ENCODE measurements at regions of chr20 and their contacts with region 1.

Region 1: DNA sequence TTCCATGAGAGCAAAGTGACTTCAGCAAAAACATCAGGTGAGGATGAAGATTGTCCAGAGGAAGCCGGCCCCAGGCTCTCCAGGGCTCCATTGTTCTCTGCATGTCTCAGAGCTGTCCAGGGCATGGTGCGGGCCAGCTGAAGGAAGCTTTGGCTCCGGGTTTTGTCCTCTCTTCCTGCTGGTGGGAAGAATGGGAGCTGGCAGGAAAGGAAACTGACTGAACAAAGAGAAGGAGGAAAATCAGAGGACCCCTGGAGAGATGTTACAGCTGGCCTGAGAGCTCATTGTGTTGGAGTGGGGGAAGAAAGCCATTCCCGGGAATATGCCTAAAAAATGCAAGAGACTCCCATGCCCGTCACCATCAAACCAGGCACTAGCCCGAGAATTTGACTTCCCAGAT is 27.1 kb downstream of the PRND start:
- DNase-seq: no peak
- H3K4me3 ChIP-seq: no peak overlapping the region
- H3K27ac ChIP-seq: no peak overlapping the region
- H3K4me1 ChIP-seq: no peaks in the 10 kb centered on the region
- H3K27me3 ChIP-seq: no peaks in the 10 kb centered on the region
- CTCF ChIP-seq: no peak

Region 2: DNA sequence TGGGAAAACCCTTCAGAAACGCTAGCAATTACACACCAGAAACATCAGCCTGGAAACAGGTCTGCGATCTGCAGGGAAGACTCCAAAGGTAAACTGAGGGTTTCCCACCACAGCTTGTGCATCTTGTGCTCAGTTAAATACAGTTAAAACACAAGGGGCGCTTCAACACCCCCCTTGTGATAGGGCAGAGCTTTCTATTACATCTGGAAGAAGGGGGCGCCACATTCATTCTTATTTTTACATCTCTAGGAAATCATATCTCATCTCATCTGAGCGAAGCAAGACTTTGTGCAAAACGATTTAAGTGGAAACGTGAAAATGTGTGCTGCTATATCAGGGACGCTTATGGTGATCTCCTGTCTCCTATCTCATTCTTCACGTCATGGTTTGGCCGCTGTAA is 31.4 kb after region 1 on chr20:
- CTCF ChIA-PET with region 1: no interaction called
- dilution Hi-C with region 1: loop called (anchors 5 kb)
- in situ Hi-C with region 1: no loop called
- intact Hi-C with region 1: no loop called
- DNase-seq: no peak
- H3K4me3 ChIP-seq: no peak overlapping the region
- H3K27ac ChIP-seq: no peak overlapping the region
- H3K4me1 ChIP-seq: no peaks in the 10 kb centered on the region
- H3K27me3 ChIP-seq: peaks cover 3% of the 10 kb centered on the region
- CTCF ChIP-seq: no peak

Region 3: DNA sequence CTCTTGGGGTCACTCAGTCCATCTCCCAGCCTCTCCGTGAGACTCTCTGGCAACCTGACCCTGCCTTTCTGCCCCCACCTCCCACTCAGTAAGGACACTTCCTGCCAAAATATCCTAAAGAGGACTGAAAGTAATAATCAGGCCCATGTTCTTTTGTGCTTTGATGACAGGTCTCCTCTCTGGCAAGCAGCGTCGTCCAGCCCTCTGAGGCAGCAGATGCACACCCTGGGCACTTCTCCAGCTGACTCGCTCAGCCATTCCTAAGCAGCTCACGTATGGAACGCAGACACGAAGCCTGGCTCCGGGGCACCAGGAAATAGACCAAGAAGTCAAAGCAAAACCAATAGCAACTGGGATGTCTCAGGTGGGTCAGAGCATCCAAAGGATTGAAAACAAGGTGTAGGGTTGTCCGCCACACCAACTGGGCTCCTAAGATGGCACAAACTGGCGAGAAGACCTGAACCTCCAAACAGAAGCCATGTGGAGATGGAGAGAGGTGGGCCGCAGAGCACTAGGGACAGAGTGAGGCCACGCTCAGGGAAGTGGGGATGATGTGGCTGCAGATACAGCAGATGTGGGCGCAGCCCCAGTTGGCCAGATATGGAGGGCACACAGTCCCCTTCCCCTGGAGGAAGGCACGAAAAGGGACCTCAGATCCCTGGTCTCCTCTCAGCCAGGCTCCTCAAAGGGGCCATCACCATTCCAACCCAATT is 72.1 kb after region 1 on chr20:
- CTCF ChIA-PET with region 1: no interaction called
- dilution Hi-C with region 1: no loop called
- in situ Hi-C with region 1: no loop called
- intact Hi-C with region 1: no loop called
- DNase-seq: peak; percentile 44
- H3K4me3 ChIP-seq: no peak overlapping the region
- H3K27ac ChIP-seq: no peak overlapping the region
- H3K4me1 ChIP-seq: peaks cover 11% of the 10 kb centered on the region
- H3K27me3 ChIP-seq: peaks cover 16% of the 10 kb centered on the region
- CTCF ChIP-seq: no peak

Region 4: GRCh38 chr20:4961746-4962145 is 212.9 kb after region 1 on chr20:
- CTCF ChIA-PET with region 1: no interaction called
- dilution Hi-C with region 1: no loop called
- in situ Hi-C with region 1: loop called in 1 of 2 experiments (anchors 10 kb)
- intact Hi-C with region 1: no loop called
- DNase-seq: peak; percentile 19
- H3K4me3 ChIP-seq: no peak overlapping the region
- H3K27ac ChIP-seq: no peak overlapping the region
- H3K4me1 ChIP-seq: no peaks in the 10 kb centered on the region
- H3K27me3 ChIP-seq: no peaks in the 10 kb centered on the region
- CTCF ChIP-seq: no peak

Measured in mammary epithelial cell (primary cell).